ENCODE measurements at regions of chr5 and their contacts with region 1.

Region 1: GRCh38 chr5:75236322-75237316 is at the start of gene ANKRD31:
- DNase-seq: peak; percentile 89
- ATAC-seq: peak; percentile 99
- H3K4me3 Mint-ChIP-seq: peak within 1 kb of the TSS; percentile 93
- H3K27ac Mint-ChIP-seq: peak within 1 kb of the TSS; percentile 83
- H3K4me1 Mint-ChIP-seq: peaks cover 9% of the 10 kb centered on the region
- H3K27me3 Mint-ChIP-seq: peaks cover 3% of the 10 kb centered on the region
- CTCF ChIP-seq: peak; percentile 62
- total RNA-seq, gene ANKRD31: 0.13 and 0.15 TPM in 2 replicates

Region 2: GRCh38 chr5:75053304-75054133 is 183.1 kb before region 1 on chr5:
- CTCF ChIA-PET with region 1: no interaction called
- POLR2A ChIA-PET with region 1: interaction called, 4 read pairs
- intact Hi-C with region 1: loop called (anchors 10 kb)
- DNase-seq: no peak
- ATAC-seq: no peak
- H3K4me3 Mint-ChIP-seq: peak overlapping the region; percentile 73
- H3K27ac Mint-ChIP-seq: no peak overlapping the region
- H3K4me1 Mint-ChIP-seq: peaks cover 10% of the 10 kb centered on the region
- H3K27me3 Mint-ChIP-seq: peaks cover 53% of the 10 kb centered on the region
- CTCF ChIP-seq: no peak

Region 3: GRCh38 chr5:75225506-75225905 is 11.1 kb before region 1 on chr5:
- CTCF ChIA-PET with region 1: no interaction called
- POLR2A ChIA-PET with region 1: no interaction called
- intact Hi-C with region 1: no loop called
- DNase-seq: no peak
- ATAC-seq: no peak
- H3K4me3 Mint-ChIP-seq: no peak overlapping the region
- H3K27ac Mint-ChIP-seq: no peak overlapping the region
- H3K4me1 Mint-ChIP-seq: no peaks in the 10 kb centered on the region
- H3K27me3 Mint-ChIP-seq: peaks cover 11% of the 10 kb centered on the region
- CTCF ChIP-seq: no peak

Region 4: DNA sequence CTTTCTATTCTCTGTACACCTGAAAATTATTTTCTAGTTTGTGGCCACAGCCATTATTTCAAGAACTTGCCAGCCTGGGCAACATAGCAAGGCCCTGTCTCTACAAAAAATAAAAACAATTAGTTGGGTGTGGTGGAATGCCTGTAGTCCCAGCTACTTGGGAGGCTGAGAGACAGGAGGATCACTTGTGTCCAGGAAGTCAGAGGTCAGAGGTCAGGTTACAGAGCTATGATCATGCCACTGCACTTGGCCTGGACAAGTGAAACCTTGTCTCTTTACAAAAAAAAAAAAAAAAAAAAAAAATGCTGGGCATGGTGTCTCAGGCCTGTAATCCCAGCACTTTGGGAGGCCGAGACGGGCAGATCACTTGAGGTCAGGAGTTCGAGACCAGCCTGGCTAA is 158.7 kb after region 1 on chr5:
- CTCF ChIA-PET with region 1: no interaction called
- POLR2A ChIA-PET with region 1: no interaction called
- intact Hi-C with region 1: no loop called
- DNase-seq: no peak
- ATAC-seq: no peak
- H3K4me3 Mint-ChIP-seq: no peak overlapping the region
- H3K27ac Mint-ChIP-seq: no peak overlapping the region
- H3K4me1 Mint-ChIP-seq: no peaks in the 10 kb centered on the region
- H3K27me3 Mint-ChIP-seq: no peaks in the 10 kb centered on the region
- CTCF ChIP-seq: no peak

Region 5: DNA sequence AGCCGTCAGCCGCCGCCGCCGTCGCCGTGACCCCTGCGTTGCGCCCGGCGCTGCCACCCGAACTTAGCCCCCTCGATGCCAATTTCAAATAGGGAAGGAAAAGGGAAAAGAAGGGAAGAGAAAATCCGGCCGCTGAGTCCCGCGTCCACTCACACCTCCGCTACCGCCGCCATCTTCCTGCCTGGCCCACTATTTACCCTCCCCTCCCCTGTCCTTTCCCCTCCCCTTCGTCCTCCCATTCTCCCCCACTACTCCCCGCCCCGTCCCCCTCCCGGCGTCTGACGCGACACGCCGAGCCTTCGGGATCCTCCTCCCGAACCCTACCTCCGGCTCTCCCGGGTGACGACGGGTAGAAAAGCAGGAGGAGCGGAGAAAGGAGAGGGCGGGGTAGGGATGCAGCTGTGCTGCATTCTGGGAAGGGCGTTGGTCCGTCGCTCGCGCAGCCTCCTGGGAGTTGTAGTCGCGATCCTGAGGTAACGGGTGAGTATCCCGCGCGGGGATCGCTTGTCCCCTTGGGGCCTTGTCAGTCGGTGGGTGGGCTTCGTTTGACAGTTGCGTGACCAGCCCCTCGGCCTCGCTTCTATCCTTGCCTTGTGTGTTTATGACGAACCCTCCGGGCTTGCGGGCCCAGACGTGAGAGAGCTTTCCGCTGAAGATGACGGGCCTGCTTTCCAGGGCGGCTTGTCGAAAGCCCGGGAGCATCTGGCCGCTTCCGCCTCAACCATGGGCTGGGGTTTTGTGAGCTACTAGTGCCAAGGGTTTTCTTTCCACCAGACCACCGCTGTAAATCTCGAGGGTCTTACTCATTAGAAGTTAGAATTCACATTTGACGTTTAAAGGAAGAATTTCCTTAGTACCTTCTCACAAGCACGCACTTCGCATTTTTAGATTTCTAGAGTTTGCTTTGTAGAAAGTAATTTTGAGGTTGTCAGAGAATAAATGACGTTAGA is 275.1 kb after region 1 on chr5 and contains the starts of genes CERT1 and POLK:
- CTCF ChIA-PET with region 1: interaction called, 4 read pairs
- POLR2A ChIA-PET with region 1: interaction called, 4 read pairs
- intact Hi-C with region 1: loop called (anchors 2 kb)
- DNase-seq: peak; percentile 85
- ATAC-seq: peak; percentile 90
- H3K4me3 Mint-ChIP-seq: peak within 1 kb of the TSS; percentile 95
- H3K27ac Mint-ChIP-seq: peak within 1 kb of the TSS; percentile 95
- H3K4me1 Mint-ChIP-seq: peaks cover 70% of the 10 kb centered on the region
- H3K27me3 Mint-ChIP-seq: no peaks in the 10 kb centered on the region
- CTCF ChIP-seq: no peak
- total RNA-seq, gene CERT1: 39.1 and 49.5 TPM in 2 replicates
- total RNA-seq, gene POLK: 29.0 and 34.0 TPM in 2 replicates

Region 6: DNA sequence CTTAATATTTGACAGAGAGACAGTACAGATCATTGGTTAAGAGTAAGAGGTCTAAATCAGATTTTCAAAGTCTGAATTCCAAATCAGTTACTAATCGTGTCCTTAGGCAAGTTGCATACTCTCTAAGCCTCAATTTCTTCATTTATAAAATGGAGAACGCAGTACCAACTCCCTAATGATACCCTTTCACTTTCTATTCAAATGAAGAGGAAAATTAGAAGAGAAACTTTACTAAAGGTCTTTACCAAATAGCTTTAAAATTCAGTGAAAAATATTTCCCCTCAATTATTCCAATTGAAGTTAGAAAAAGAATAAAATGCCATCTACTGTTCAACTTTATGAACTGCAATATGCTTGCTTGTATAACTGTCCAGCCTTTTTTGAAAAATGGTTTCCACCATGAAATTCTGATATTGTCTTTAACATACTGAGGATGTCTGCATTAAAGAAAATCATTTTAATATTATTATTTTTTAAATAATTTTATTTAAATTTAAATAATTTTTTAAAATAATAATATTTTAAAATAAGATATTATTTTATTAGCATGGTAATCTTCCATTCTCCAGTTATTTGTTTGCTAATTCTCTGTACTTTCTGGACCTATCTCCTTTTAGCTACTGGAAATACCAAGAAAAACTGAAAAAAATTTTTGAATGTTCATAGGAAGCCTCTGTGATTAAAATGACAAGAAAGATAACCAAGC is 444.7 kb after region 1 on chr5:
- CTCF ChIA-PET with region 1: interaction called, 65 read pairs
- POLR2A ChIA-PET with region 1: no interaction called
- intact Hi-C with region 1: loop called (anchors 1 kb)
- DNase-seq: no peak
- ATAC-seq: peak; percentile 45
- H3K4me3 Mint-ChIP-seq: no peak overlapping the region
- H3K27ac Mint-ChIP-seq: no peak overlapping the region
- H3K4me1 Mint-ChIP-seq: no peaks in the 10 kb centered on the region
- H3K27me3 Mint-ChIP-seq: no peaks in the 10 kb centered on the region
- CTCF ChIP-seq: peak; percentile 82

Region 7: DNA sequence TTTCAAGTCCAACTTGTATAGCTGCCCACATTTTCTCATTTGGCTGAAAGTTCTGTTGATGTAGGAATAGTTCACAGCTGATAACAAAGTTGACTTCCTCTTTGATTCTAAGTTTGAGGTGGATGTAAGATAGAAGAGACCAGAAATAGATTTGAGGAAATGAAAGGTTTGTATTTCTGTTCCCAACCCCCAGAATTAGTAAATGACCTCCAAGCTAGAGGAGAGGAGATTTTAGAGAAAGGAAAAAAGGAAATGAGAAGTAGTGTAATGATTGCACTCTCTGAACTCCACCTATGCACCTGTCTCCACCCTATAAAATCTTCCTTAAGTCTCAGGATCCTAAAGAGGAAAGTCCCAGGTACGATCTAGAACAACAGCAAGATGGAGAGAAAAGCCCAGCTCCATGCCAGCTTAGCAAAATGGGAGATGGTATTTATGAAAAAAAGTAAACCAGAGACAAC is 611.0 kb after region 1 on chr5:
- CTCF ChIA-PET with region 1: no interaction called
- POLR2A ChIA-PET with region 1: no interaction called
- intact Hi-C with region 1: loop called (anchors 10 kb)
- DNase-seq: no peak
- ATAC-seq: peak; percentile 89
- H3K4me3 Mint-ChIP-seq: peak overlapping the region; percentile 50
- H3K27ac Mint-ChIP-seq: peak overlapping the region; percentile 82
- H3K4me1 Mint-ChIP-seq: peaks cover 45% of the 10 kb centered on the region
- H3K27me3 Mint-ChIP-seq: no peaks in the 10 kb centered on the region
- CTCF ChIP-seq: no peak

Region 8: DNA sequence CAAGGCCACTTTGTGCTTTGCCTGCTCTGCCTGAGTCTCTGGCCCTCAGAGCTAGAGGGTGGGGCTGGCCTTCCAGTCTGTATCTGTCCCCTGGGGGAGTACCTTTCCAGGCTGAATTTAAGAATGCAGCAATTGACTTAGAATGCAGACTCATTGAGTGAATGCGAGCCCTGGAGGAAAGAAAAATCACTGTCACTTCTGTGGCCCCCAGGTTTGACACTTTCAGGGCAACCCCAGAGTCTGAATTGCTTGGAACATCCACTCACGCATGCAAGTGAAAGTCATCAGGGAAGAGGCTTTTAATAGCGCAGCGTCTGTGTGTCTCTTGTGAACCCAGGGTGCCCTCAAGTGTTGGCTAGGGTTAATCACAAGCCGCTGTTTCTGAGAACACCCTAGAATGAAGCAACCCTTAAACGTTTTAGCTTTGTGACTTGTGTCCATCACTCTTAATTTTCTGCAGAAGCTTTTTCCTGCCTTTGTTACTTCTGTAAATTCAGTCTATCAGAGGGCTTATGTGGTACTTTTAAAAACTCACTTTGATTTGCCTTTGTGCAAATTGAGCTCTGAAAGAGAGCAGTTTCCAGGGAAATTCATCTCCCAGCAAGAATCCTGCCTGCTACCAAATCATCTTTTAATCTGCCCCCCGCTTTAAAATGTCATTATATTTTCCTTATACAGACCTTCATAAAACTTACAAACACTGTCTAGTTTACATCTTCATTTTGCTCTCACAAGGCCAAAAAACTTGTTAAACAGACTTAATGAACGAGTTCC is 1019.7 kb after region 1 on chr5:
- CTCF ChIA-PET with region 1: interaction called, 4 read pairs
- POLR2A ChIA-PET with region 1: no interaction called
- intact Hi-C with region 1: loop called (anchors 2 kb)
- DNase-seq: no peak
- ATAC-seq: peak; percentile 77
- H3K4me3 Mint-ChIP-seq: no peak overlapping the region
- H3K27ac Mint-ChIP-seq: no peak overlapping the region
- H3K4me1 Mint-ChIP-seq: peaks cover 2% of the 10 kb centered on the region
- H3K27me3 Mint-ChIP-seq: peaks cover 15% of the 10 kb centered on the region
- CTCF ChIP-seq: no peak

Measured in activated B cell treated with CpG ODN at 0.5 μM for 24 hours (primary cell).